ENCODE measurements at regions of chr19 and their contacts with region 1.

Region 1: DNA sequence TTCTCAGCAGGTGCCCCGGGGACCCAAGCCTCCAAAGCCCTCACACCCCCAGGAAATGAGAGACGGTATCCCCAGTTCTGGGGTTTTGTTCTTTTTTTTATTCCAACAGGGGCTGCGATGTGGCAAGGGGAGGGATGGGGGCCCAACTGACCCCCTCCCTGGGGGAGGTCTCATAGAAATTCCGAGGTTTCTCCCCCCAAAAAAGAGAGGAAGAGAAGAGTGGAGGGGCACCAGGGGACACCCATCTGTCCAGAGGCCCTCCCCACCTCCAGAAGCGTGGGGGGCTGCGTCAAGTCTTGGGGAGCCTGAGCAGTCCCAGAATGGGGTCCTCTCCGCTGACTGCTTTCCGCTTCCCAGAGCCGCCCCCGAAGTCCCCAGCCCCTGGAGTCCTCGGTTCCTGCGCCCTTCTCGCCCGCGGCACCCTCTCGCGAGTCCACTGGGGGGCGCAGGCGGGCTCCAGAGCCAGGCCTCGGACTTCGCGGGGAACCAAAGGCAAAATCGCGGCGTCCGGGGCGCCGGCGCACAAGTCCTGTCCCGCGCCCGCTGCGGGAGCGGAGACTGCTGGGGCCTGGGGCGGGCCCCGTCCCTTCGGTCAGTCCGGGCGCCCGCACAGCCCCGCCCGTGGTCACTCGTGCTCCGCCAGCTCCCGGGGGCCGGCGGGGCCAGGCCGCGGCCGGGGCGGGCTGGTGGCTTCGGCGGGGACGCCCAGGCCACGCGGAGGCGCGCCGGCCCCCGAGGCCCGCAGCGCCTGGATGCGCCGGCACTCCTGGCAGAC is 4.4 kb upstream of the ATP1A3 start:
- DNase-seq: peak; percentile 89
- H3K4me3 ChIP-seq: peak overlapping the region; percentile 34 to 53; a peak in 3 of 4 replicates
- H3K27ac ChIP-seq: peak overlapping the region in 1 of 2 experiments; percentile 98; a peak in 2 of 4 replicates
- H3K4me1 ChIP-seq: peaks cover 0 to 50% of the 10 kb centered on the region in 2 experiments; a peak in 1 of 4 replicates
- H3K27me3 ChIP-seq: peaks cover 54% of the 10 kb centered on the region
- CTCF ChIP-seq: peak; percentile 60
- EP300 ChIP-seq: no peak
- RAD21 ChIP-seq: peak; percentile 54

Region 2: GRCh38 chr19:42010245-42011126 is 12.1 kb after region 1 on chr19:
- CTCF ChIA-PET with region 1: interaction called, 39 read pairs
- POLR2A ChIA-PET with region 1: interaction called, 3 read pairs
- DNase-seq: no peak
- H3K4me3 ChIP-seq: no peak overlapping the region
- H3K27ac ChIP-seq: no peak overlapping the region
- H3K4me1 ChIP-seq: no peaks in the 10 kb centered on the region
- H3K27me3 ChIP-seq: no peaks in the 10 kb centered on the region
- CTCF ChIP-seq: no peak
- EP300 ChIP-seq: no peak
- RAD21 ChIP-seq: no peak

Region 3: GRCh38 chr19:42038666-42039065 is 40.2 kb after region 1 on chr19:
- CTCF ChIA-PET with region 1: interaction called, 19 read pairs
- POLR2A ChIA-PET with region 1: interaction called, 5 read pairs
- DNase-seq: no peak
- H3K4me3 ChIP-seq: no peak overlapping the region
- H3K27ac ChIP-seq: no peak overlapping the region
- H3K4me1 ChIP-seq: no peaks in the 10 kb centered on the region
- H3K27me3 ChIP-seq: 0 out of 2 replicates have a peak, but pooled peaks cover 3% of the 10 kb centered on the region
- CTCF ChIP-seq: no peak
- EP300 ChIP-seq: no peak
- RAD21 ChIP-seq: no peak

Measured in SK-N-SH (cell line).